PC-3 (cell line): ENCODE measurements at regions of chr10 and their contacts with region 1.

Region 1: GRCh38 chr10:5094265-5095205 is at the start of gene AKR1C3:
- DNase-seq: peak; percentile 53
- ATAC-seq: peak; percentile 84
- H3K4me3 ChIP-seq: peak within 1 kb of the TSS; percentile 74
- H3K27ac ChIP-seq: peak within 1 kb of the TSS; percentile 31
- H3K4me1 ChIP-seq: no peaks in the 10 kb centered on the region
- H3K27me3 ChIP-seq: no peaks in the 10 kb centered on the region
- CTCF ChIP-seq: peak; percentile 65
- total RNA-seq, gene AKR1C3: 15.8 and 24.0 TPM in 2 replicates

Region 2: DNA sequence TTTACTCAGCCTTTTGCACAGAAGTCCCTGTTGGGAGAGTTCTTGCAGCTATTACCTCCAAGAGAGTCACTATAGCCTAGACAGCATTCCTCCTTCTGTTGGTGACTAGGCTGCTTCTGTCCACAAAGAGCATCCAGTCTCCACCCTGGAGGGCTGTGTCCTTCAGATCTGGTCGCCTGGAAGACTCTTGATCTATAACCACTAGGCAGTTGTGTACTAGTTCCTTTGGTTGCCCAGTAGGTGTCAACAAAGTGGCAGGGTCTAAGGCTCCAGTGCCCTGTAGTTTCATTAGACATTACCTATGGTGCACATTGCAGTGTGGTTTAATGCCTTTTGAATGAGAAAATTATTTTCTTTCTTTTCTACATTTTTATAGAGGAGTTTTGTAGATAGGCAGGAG is 79.6 kb before region 1 on chr10:
- CTCF ChIA-PET with region 1: no interaction called
- POLR2A ChIA-PET with region 1: no interaction called
- intact Hi-C with region 1: loop called (anchors 2 kb)
- DNase-seq: peak; percentile 11
- ATAC-seq: peak; percentile 21
- H3K4me3 ChIP-seq: no peak overlapping the region
- H3K27ac ChIP-seq: no peak overlapping the region
- H3K4me1 ChIP-seq: peaks cover 21% of the 10 kb centered on the region
- H3K27me3 ChIP-seq: no peaks in the 10 kb centered on the region
- CTCF ChIP-seq: peak; percentile 33; the same call in 1 of the 2 replicates

Region 3: GRCh38 chr10:5117026-5117425 is 22.5 kb after region 1 on chr10:
- CTCF ChIA-PET with region 1: no interaction called
- POLR2A ChIA-PET with region 1: no interaction called
- intact Hi-C with region 1: no loop called
- DNase-seq: no peak
- ATAC-seq: no peak
- H3K4me3 ChIP-seq: no peak overlapping the region
- H3K27ac ChIP-seq: no peak overlapping the region
- H3K4me1 ChIP-seq: no peaks in the 10 kb centered on the region
- H3K27me3 ChIP-seq: no peaks in the 10 kb centered on the region
- CTCF ChIP-seq: no peak

Region 4: GRCh38 chr10:5343562-5343961 is 249.0 kb after region 1 on chr10:
- CTCF ChIA-PET with region 1: no interaction called
- POLR2A ChIA-PET with region 1: no interaction called
- intact Hi-C with region 1: no loop called
- DNase-seq: no peak
- ATAC-seq: no peak
- H3K4me3 ChIP-seq: no peak overlapping the region
- H3K27ac ChIP-seq: no peak overlapping the region
- H3K4me1 ChIP-seq: no peaks in the 10 kb centered on the region
- H3K27me3 ChIP-seq: no peaks in the 10 kb centered on the region
- CTCF ChIP-seq: 0 out of 2 replicates have a peak, but pooled peaks have one; percentile 15

Region 5: GRCh38 chr10:5385224-5385623 is 290.7 kb after region 1 on chr10:
- CTCF ChIA-PET with region 1: no interaction called
- POLR2A ChIA-PET with region 1: no interaction called
- intact Hi-C with region 1: loop called (anchors 5 kb)
- DNase-seq: no peak
- ATAC-seq: no peak
- H3K4me3 ChIP-seq: no peak overlapping the region
- H3K27ac ChIP-seq: no peak overlapping the region
- H3K4me1 ChIP-seq: no peaks in the 10 kb centered on the region
- H3K27me3 ChIP-seq: no peaks in the 10 kb centered on the region
- CTCF ChIP-seq: no peak